ENCODE measurements at regions of chr1 and their contacts with region 1.

Region 1: DNA sequence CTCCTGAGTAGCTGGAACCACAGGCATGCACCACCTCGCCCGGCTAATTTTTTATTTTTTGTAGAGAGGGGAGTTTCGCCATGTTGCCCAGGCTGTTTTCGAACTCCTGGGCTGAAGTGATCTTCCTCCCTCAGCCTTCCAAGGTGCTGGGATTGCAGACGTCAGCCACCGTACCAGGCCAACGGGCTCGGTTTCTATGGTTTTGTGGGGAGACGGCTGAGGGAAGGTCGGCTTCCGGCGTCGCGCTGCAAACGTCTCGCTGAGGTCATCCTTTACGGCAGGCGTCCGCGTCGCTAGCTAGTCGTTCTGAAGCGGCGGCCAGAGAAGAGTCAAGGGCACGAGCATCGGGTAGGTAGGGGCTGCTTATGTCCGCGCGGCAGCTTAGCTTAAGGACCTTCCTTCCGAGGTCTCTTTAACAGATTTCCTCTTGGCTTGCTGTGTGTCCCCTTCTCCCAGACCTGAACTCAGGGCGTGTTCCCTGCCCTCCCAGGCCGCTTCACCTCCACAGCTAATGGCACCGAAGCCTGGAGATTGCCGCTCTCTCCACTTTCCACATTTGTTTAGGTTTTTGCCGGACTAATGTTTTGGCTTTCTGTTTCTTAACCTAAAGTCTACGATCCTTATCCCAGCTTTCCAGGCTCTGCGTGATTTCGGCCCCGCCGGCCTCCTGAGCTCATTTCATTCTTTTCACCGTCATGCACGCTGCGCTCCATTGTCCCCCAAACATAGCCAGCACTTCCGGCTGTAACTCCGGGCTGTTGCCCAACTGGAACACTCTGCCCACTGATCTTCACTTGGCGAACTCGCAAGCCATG is at the start of gene NDUFS5:
- DNase-seq: peak; percentile 91
- H3K4me3 Mint-ChIP-seq: peak within 1 kb of the TSS; percentile 88
- H3K27ac Mint-ChIP-seq: peak within 1 kb of the TSS; percentile 95
- H3K4me1 Mint-ChIP-seq: peaks cover 28% of the 10 kb centered on the region
- H3K27me3 Mint-ChIP-seq: no peaks in the 10 kb centered on the region
- total RNA-seq, gene NDUFS5: 238 to 240 TPM

Region 2: DNA sequence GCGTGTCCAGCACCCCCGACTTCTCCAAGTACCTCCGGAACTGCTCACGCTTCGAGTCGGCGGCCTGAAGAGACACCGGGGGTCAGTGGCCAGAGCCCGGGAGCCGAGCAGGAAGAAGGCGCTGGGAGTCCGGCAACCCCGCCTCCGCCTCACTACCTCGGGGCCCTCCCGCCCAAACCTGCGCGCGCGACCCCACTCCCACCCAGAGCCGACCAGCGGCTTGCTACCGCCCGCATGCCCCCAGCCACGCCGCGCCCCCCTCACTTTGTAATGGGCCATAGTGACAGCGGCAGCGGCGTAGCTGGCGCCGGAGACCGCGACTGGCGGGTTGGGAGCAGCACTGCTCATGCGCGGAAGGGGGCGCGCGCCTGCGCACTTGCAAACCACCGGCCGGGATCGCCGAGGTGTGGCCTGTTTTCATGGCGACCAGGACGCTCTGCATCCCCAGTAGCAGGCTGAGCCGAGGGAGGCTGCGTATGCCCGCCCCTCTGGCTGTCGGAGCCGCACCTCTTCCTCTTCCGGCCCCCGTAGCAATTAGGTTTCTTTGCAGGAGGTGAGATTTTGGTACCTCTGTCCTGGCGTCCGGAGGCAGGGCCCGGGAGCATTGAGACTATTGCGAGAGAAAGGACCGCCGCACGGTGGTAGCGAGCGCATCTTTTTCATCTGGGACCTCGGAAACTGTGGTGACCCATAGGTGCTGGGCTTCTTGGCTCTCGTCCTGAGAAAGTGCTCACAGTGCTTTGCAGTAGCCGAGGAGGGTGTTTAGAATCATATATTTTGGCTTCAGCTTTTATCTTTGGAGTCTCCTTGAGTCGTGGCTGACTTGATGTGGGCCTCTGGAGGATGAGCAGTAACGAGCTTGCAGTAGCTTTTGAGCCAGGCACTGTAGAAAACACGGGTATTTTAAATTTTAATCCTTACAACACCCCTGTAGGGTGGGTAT is 153.0 kb before region 1 on chr1 and contains the start of gene MYCBP:
- CTCF ChIA-PET with region 1: interaction called, 5 read pairs
- POLR2A ChIA-PET with region 1: interaction called, 3 read pairs
- intact Hi-C with region 1: loop called (anchors 5 kb)
- DNase-seq: peak; percentile 98
- H3K4me3 Mint-ChIP-seq: peak within 1 kb of the TSS; percentile 91
- H3K27ac Mint-ChIP-seq: peak within 1 kb of the TSS; percentile 71
- H3K4me1 Mint-ChIP-seq: peaks cover 26% of the 10 kb centered on the region
- H3K27me3 Mint-ChIP-seq: no peaks in the 10 kb centered on the region
- total RNA-seq, gene MYCBP: 70.6 to 76.5 TPM

Region 3: GRCh38 chr1:39003794-39004193 is 22.5 kb before region 1 on chr1:
- CTCF ChIA-PET with region 1: interaction called, 3 read pairs
- POLR2A ChIA-PET with region 1: interaction called, 9 read pairs
- intact Hi-C with region 1: loop called (anchors 1 kb)
- DNase-seq: no peak
- H3K4me3 Mint-ChIP-seq: peak overlapping the region; percentile 41
- H3K27ac Mint-ChIP-seq: peak overlapping the region; percentile 89
- H3K4me1 Mint-ChIP-seq: peaks cover 44% of the 10 kb centered on the region
- H3K27me3 Mint-ChIP-seq: no peaks in the 10 kb centered on the region

Region 4: GRCh38 chr1:39091845-39092645 is 65.8 kb after region 1 on chr1:
- CTCF ChIA-PET with region 1: interaction called, 12 read pairs
- POLR2A ChIA-PET with region 1: no interaction called
- intact Hi-C with region 1: no loop called
- DNase-seq: peak; percentile 77
- H3K4me3 Mint-ChIP-seq: no peak overlapping the region
- H3K27ac Mint-ChIP-seq: no peak overlapping the region
- H3K4me1 Mint-ChIP-seq: peaks cover 6% of the 10 kb centered on the region
- H3K27me3 Mint-ChIP-seq: peaks cover 3% of the 10 kb centered on the region

Region 5: DNA sequence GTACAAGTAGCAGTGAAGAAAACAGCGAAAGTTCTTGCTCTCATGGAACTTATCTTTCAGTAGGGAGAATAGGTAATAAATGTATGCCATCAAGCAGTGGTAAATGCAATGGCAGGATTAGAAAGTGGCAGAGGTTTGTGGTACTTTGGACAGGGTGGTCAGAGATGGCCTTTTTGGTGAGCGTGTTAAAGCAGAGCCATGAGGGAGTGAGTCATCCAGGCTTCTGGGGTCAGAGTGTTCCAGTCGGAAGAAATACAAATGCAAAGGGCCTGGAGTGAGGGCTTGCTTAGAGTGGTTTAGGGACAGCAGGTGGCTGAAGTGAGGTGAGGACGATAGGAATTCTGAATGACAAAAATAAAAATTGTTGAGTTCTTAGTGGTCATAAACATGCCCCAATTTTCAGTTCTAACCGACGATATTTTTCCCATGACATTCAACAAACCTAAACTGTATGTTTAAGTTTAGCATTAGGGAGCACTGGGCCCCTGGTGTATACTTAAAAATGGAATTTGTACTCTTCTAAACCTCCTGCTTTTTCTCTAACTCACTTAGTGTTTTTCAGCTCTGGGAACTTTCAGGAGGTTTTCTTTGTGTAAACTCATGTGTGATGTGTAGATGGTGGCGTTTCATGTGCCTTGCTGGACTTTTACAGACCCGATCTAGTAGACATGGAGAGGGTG is 256.4 kb after region 1 on chr1:
- CTCF ChIA-PET with region 1: no interaction called
- POLR2A ChIA-PET with region 1: no interaction called
- intact Hi-C with region 1: no loop called
- DNase-seq: no peak
- H3K4me3 Mint-ChIP-seq: no peak overlapping the region
- H3K27ac Mint-ChIP-seq: no peak overlapping the region
- H3K4me1 Mint-ChIP-seq: peaks cover 18% of the 10 kb centered on the region
- H3K27me3 Mint-ChIP-seq: no peaks in the 10 kb centered on the region

Measured in activated CD4-positive, alpha-beta memory T cell treated with anti-CD3 and anti-CD28 coated beads for 36 hours (primary cell).